Activated CD4-positive, alpha-beta T cell treated with anti-CD3 and anti-CD28 coated beads, Interleukin-2, amount 10 ng/mL, durations not matched to agents 24 days and 14 days (primary cell): ENCODE measurements at regions of chr13 and their contacts with region 1.

Region 1: GRCh38 chr13:110819203-110820014 is 95.5 kb downstream of the ANKRD10 start:
- DNase-seq: peak; percentile 92
- H3K4me3 Mint-ChIP-seq: no peak overlapping the region
- H3K27ac Mint-ChIP-seq: no peak overlapping the region
- H3K4me1 Mint-ChIP-seq: peaks cover 7% of the 10 kb centered on the region
- H3K27me3 Mint-ChIP-seq: peaks cover 14% of the 10 kb centered on the region

Region 2: GRCh38 chr13:110220471-110220870 is 598.9 kb before region 1 on chr13:
- intact Hi-C with region 1: loop called (anchors 5 kb)
- DNase-seq: no peak
- H3K4me3 Mint-ChIP-seq: no peak overlapping the region
- H3K27ac Mint-ChIP-seq: no peak overlapping the region
- H3K4me1 Mint-ChIP-seq: no peaks in the 10 kb centered on the region
- H3K27me3 Mint-ChIP-seq: peaks cover 24% of the 10 kb centered on the region

Region 3: GRCh38 chr13:110455941-110456340 is 363.5 kb before region 1 on chr13:
- intact Hi-C with region 1: loop called (anchors 1 kb)
- DNase-seq: peak; percentile 89
- H3K4me3 Mint-ChIP-seq: peak overlapping the region; percentile 64
- H3K27ac Mint-ChIP-seq: peak overlapping the region; percentile 2
- H3K4me1 Mint-ChIP-seq: peaks cover 4% of the 10 kb centered on the region
- H3K27me3 Mint-ChIP-seq: peaks cover 22% of the 10 kb centered on the region

Region 4: GRCh38 chr13:110575322-110576069 is 243.9 kb before region 1 on chr13:
- intact Hi-C with region 1: loop called (anchors 5 kb)
- DNase-seq: peak; percentile 63
- H3K4me3 Mint-ChIP-seq: peak overlapping the region; percentile 60
- H3K27ac Mint-ChIP-seq: no peak overlapping the region
- H3K4me1 Mint-ChIP-seq: peaks cover 11% of the 10 kb centered on the region
- H3K27me3 Mint-ChIP-seq: peaks cover 50% of the 10 kb centered on the region

Region 5: DNA sequence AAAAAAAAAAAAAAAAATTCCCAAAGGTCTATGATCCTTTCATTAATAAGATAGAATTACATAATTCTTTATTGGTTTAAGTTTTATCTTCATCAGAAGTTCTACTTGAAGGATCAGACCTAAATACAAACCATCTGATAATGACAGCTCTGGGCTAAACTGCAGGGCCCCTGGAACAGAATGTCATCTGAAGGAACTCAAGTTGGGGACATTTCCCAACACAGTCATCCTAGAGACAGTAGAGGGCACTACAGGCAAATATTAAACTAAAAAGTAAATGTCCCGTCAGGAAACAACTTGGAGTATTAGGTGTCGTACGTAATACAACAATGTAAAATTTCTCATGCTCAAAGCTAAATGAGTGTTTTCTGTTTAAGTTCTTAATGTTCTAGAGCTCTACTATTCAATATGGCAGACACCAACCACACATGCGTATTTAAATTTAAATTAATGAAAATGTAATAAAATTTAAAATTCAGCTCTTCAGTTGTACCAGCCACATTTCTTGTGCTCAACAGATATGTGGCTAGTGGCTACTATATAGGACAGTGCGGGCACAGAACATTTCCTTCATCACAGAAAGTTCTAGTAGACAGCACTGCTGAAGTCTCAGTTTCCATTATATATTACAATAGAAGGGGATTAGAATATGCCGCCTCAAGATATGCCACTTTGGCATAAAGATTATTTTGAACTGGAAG is 225.8 kb before region 1 on chr13:
- intact Hi-C with region 1: loop called (anchors 1 kb)
- DNase-seq: peak; percentile 69
- H3K4me3 Mint-ChIP-seq: no peak overlapping the region
- H3K27ac Mint-ChIP-seq: no peak overlapping the region
- H3K4me1 Mint-ChIP-seq: peaks cover 1% of the 10 kb centered on the region
- H3K27me3 Mint-ChIP-seq: peaks cover 23% of the 10 kb centered on the region

Region 6: GRCh38 chr13:110683203-110683883 is 136.1 kb before region 1 on chr13:
- intact Hi-C with region 1: loop called (anchors 2 kb)
- DNase-seq: peak; percentile 78
- H3K4me3 Mint-ChIP-seq: no peak overlapping the region
- H3K27ac Mint-ChIP-seq: no peak overlapping the region
- H3K4me1 Mint-ChIP-seq: peaks cover 1% of the 10 kb centered on the region
- H3K27me3 Mint-ChIP-seq: no peaks in the 10 kb centered on the region

Region 7: DNA sequence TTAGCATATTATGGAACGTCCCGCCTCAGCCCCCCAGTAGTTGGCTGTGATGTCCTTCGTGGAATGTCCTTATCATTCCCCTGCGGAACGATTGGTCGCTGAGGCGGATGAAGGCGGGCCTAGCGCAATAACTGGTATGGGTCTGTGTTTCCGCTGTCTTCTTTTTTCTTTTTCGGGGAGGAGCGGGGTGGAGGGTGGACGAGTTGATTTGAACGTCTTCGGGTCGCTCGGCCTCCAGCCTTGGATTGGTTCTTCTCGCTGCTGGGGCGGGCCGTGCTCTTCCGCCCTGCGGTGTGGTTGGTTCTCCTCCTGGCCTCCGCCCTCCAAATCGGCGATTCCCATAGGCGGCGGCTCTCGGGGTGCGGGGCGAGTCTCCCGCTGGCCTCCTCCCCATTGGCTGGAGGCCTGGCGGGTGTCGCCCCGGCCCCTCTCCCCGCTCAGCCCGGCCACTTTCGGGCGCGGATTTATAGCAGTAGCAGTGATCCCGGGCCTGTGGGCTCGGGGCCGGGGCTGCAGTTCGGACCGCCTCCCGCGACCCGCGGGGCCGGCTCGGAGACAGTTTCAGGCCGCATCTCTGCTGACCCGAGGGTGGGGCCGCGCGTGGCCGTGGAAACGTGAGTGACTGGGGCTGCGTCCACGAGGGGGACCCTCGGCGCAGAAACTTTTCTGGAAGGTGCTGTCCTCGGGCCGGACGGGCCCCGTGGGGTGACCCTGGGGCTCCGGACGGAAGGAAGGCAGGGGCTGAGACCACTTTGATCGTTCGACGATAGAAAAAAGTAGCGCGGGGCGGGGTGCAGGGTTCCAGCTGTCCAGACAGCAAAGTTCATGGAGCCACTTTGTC is 103.8 kb before region 1 on chr13:
- intact Hi-C with region 1: loop called (anchors 2 kb)
- DNase-seq: peak; percentile 98
- H3K4me3 Mint-ChIP-seq: peak overlapping the region; percentile 96
- H3K27ac Mint-ChIP-seq: peak overlapping the region; percentile 95
- H3K4me1 Mint-ChIP-seq: peaks cover 29% of the 10 kb centered on the region
- H3K27me3 Mint-ChIP-seq: peaks cover 2% of the 10 kb centered on the region